T-cell (primary cell): ENCODE measurements at regions of chr6 and their contacts with region 1.

Region 1: DNA sequence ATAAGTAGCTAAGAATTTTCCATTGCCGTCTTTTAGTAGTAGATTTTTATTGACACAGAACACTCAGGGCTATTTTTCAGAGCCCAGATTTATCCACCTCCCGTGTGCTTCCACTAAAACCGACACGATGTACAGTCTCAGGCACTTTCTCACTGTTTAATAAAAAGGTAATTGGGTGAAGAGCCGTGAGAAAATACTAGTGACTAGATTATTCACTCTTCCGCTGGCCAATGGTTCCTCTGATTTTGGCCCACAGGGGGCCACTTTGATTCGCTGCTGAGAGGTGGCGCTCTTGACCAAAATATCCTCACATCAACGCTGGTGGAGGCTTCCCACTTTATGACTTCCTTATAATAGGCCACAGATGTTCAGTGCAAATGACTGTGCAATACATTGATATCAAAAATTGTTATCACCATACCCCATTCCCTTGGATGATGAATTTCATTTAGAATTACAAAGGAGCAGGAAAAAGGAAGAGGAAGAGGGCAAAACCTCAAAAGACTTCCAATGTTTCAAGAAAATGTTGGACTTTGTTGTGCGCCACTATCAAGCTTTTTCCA is 12.3 kb upstream of the HDDC2 start:
- DNase-seq: peak in 16 of 35 experiments; percentile 6 to 61 (median 16)
- ATAC-seq: peak; percentile 46 to 67 (median 50)
- H3K4me3 ChIP-seq: no peak overlapping the region
- H3K4me3 Mint-ChIP-seq: no peak overlapping the region
- H3K27ac ChIP-seq: no peak overlapping the region
- H3K27ac Mint-ChIP-seq: no peak overlapping the region
- H3K4me1 ChIP-seq: no peaks in the 10 kb centered on the region
- H3K4me1 Mint-ChIP-seq: peaks cover 0 to 2% (median 2%) of the 10 kb centered on the region in 3 donors
- H3K27me3 ChIP-seq: peaks cover 0 to 7% of the 10 kb centered on the region in 2 experiments
- H3K27me3 Mint-ChIP-seq: peaks cover 14 to 16% of the 10 kb centered on the region in 2 donors

Region 2: GRCh38 chr6:125301435-125302391 is 12.4 kb before region 1 on chr6 and contains the start of gene HDDC2:
- CTCF ChIA-PET with region 1: interaction called, 5 to 12 read pairs
- POLR2A ChIA-PET with region 1: no interaction called
- DNase-seq: peak in 24 of 35 experiments; percentile 2 to 58 (median 20)
- ATAC-seq: peak; percentile 36 to 57 (median 55)
- H3K4me3 ChIP-seq: peak within 1 kb of the TSS; percentile 71 to 78
- H3K4me3 Mint-ChIP-seq: peak within 1 kb of the TSS; percentile 84 to 90 (median 84)
- H3K27ac ChIP-seq: peak within 1 kb of the TSS; percentile 81
- H3K27ac Mint-ChIP-seq: peak within 1 kb of the TSS; percentile 93 to 95
- H3K4me1 ChIP-seq: peaks cover 28 to 32% of the 10 kb centered on the region in 2 experiments
- H3K4me1 Mint-ChIP-seq: peaks cover 57 to 60% (median 57%) of the 10 kb centered on the region in 3 donors
- H3K27me3 ChIP-seq: no peaks in the 10 kb centered on the region
- H3K27me3 Mint-ChIP-seq: peaks cover 4 to 5% of the 10 kb centered on the region in 2 donors
- total RNA-seq, gene HDDC2: 32.0 to 48.0 (median 42.1) TPM